AG04450 (cell line): ENCODE measurements at regions of chr3 and their contacts with region 1.

Region 1: GRCh38 chr3:30768703-30769685 is 125.5 kb downstream of the GADL1 start:
- DNase-seq: no peak
- H3K4me3 ChIP-seq: no peak overlapping the region
- H3K27ac ChIP-seq: no peak overlapping the region
- H3K27me3 ChIP-seq: no peaks in the 10 kb centered on the region
- CTCF ChIP-seq: peak; percentile 89

Region 2: DNA sequence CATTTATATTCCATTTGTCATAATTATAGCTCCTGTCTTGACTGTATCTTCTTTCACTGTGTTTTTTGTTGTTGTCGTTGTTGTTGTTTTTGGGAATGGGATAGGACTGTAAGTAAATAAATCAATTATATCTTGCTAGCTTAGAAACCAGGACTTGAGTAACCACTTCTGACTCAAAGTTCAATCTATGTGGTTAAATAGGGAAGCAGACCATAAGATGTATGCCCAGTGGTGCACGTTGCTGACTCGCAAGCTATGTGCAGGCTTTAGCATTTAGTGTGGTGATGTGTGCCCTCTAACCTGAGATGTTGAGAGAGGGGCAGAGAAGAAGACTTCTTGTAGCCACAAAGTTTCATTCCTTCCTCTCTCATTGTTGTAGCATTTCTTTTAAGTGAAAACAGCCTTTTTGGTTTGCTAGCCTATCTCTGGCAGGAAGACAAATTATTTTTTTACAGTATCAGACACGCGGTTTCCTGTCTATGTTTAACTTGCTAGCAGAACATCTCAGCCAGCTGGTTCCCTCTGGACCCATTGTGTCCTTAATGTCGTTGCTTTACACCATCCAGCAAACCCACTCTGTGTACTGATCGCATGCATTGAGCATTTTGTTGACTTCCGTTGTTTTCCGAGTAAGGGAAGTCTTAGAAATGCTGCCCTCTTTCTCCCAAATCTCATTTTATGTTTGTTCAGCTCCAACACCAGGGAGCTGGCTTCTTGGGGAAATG is 110.5 kb before region 1 on chr3:
- CTCF ChIA-PET with region 1: no interaction called
- POLR2A ChIA-PET with region 1: no interaction called
- DNase-seq: peak; percentile 43
- H3K4me3 ChIP-seq: peak overlapping the region; percentile 27
- H3K27ac ChIP-seq: peak overlapping the region; percentile 95
- H3K27me3 ChIP-seq: no peaks in the 10 kb centered on the region
- CTCF ChIP-seq: 0 out of 2 replicates have a peak, but pooled peaks have one; percentile 12

Region 3: GRCh38 chr3:30751610-30752299 is 17.2 kb before region 1 on chr3:
- CTCF ChIA-PET with region 1: interaction called, 35 read pairs
- POLR2A ChIA-PET with region 1: no interaction called
- DNase-seq: no peak
- H3K4me3 ChIP-seq: no peak overlapping the region
- H3K27ac ChIP-seq: no peak overlapping the region
- H3K27me3 ChIP-seq: no peaks in the 10 kb centered on the region
- CTCF ChIP-seq: peak; percentile 60

Region 4: GRCh38 chr3:31132132-31132769 is 363.3 kb after region 1 on chr3:
- CTCF ChIA-PET with region 1: interaction called, 41 read pairs
- POLR2A ChIA-PET with region 1: no interaction called
- DNase-seq: peak; percentile 2
- H3K4me3 ChIP-seq: no peak overlapping the region
- H3K27ac ChIP-seq: no peak overlapping the region
- H3K27me3 ChIP-seq: no peaks in the 10 kb centered on the region
- CTCF ChIP-seq: peak; percentile 62

Region 5: DNA sequence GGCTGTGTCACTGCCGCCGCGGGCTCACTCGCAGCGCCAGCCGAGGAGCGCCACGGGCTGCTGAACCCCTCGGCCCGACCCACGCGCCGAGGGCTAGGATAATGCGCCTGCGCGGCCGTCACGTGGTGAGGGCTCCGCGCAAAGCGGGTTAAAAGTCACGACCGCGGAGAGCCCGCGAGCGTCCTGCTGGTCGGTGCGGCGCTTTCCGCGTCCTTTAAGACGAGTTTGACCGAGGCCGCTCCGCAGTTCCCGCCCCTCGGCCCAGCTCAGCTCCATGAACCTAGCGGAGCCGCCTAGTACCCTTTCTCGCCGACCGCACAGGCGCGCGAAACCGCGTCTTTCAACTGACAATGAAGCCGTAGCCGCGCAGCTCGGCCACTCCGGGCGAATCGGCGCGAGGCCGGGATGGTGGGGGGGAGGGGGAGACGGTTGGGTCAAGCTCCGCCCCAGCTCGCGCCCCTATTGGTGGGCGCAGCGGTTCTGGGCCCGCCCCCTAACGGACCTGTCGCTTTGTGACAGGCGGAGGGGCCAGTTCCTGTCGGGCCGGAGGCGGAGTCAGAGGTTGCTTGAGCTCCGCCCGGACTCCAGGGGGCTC is 763.1 kb after region 1 on chr3:
- CTCF ChIA-PET with region 1: interaction called, 13 read pairs
- POLR2A ChIA-PET with region 1: interaction called, 12 read pairs
- DNase-seq: peak; percentile 98
- H3K4me3 ChIP-seq: peak overlapping the region; percentile 84
- H3K27ac ChIP-seq: peak overlapping the region; percentile 99
- H3K27me3 ChIP-seq: no peaks in the 10 kb centered on the region
- CTCF ChIP-seq: no peak